ENCODE measurements at regions of chr10 and their contacts with region 1.

Region 1: GRCh38 chr10:31947144-31947926 is 18.7 kb upstream of the ARHGAP12 start:
- DNase-seq: no peak

Region 2: DNA sequence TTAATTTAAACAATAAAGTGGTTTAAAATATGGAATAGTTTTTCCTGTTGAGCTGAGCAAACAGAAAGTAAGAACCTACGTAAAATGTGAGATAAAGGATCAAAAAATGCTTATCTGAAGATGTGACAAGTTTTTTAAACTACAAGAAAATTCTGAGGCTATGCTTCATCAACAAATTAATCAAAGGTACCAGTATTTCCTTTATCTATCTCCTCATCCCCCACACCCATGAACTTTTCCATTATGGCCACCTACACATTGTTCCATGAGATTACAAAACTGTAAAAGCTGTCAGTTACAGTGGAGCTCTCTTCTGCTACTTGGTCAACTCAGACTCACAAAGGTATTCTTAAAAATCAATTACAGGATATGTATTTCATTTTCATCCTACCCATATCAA is 96.1 kb before region 1 on chr10:
- intact Hi-C with region 1: no loop called
- DNase-seq: no peak

Region 3: DNA sequence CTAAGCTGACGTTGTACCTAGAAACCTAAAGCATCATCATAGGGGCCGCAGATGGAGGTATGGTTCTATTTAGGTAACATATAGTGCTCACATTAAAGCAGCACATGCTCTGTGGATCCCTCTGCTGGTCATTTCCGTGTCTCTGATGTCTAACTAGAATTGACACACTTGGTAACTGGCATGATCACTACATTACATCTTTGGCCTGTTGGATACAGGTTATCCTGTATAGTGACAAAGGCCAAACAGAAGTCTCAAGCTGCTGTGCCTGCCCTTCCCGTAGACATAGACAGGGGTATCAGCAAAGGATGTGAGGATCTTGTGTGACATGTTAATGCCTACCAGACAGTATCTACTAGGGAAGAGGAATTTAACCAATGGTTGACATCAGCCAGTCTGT is 57.7 kb after region 1 on chr10:
- intact Hi-C with region 1: loop called (anchors 10 kb)
- DNase-seq: peak in 3 of 10 donors; percentile 17 to 29 (median 21)